Left cardiac atrium (tissue), 4 donors: ENCODE measurements at regions of chr2 and their contacts with region 1.

Region 1: DNA sequence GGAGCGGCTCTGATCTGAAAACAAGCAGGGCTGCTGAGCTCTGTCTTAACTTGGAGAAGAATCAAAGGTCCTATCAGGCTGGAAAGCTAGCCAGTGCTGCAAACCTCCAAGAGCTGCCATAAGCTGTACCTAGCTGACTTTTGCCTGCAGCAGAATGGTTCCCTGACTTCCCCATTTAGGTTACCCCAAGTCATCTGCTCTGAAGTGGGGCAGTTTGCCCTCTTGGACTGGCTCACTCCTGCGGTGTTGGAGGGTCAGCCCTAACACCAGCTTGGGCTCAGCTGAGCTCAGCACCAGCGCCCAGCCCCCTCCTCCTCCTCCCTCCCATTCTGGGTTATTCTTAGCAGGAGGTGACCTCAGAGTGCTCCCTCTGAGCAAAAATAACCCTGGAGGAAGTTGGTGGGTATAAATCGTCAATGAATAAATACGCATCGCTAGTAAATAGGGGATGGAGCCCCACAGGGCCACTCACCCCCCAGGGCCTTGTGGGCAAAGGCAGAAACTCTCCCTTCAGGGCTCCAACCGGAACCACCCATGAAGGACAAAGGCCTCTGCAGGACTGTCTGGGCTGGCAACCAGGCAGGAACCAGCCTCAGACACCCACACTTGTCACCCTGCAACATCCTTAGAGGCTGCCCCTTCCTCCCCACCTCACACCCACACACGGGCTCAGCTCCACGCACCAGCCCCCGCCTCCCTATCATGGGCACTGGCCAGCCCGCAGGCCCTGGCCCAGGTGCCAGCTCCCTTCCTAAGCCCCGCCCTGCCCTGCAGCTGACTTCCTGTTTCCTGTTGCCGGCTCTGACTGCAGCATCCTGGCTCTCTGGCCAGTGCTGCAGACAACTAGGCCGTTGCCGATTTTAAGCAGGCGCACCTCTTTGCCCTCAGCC is 46.9 kb downstream of the DNMT3A start:
- DNase-seq: peak; percentile 84
- ATAC-seq: peak; percentile 90 to 91

Region 2: GRCh38 chr2:25279091-25279651 is 15.6 kb before region 1 on chr2:
- intact Hi-C with region 1: loop called in 1 of 2 experiments (anchors 2 kb)
- DNase-seq: peak; percentile 69
- ATAC-seq: peak; percentile 41 to 73